GM12878 (cell line): ENCODE measurements at regions of chr4 and their contacts with region 1.

Region 1: GRCh38 chr4:163701916-163702315 is 207.4 kb downstream of the TMA16 start:
- DNase-seq: peak; percentile 49
- ATAC-seq: peak; percentile 93
- H3K4me3 ChIP-seq: no peak overlapping the region
- H3K27ac ChIP-seq: no peak overlapping the region
- H3K4me1 ChIP-seq: peaks cover 9% of the 10 kb centered on the region; the same call in 1 of the 2 replicates
- H3K27me3 ChIP-seq: no peaks in the 10 kb centered on the region
- CTCF ChIP-seq: no peak
- EP300 ChIP-seq: peak; percentile 49 to 77; a peak in 2 of 4 replicates
- POLR2A ChIP-seq: no peak
- RAD21 ChIP-seq: no peak

Region 2: DNA sequence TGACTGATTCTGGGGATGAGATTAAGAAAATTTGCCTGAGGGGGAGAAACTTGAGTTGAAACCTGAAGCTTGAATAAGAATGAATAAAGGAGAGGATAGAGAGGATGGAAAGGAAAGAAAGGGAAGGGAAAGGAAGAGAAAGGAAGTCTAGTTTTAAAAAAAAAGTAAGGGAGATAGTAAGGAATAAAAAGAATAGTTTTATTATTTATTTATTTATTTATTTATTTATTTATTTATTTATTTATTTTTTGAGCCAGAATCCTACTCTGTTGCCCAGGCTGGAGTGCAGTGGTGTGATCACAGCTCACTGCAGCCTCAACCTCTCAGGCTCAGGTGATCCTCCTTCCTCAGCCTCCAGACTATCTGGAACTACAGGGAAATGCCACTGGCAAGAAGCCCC is 473.3 kb before region 1 on chr4:
- CTCF ChIA-PET with region 1: no interaction called
- POLR2A ChIA-PET with region 1: no interaction called
- RAD21 ChIA-PET with region 1: no interaction called
- SMC1A ChIA-PET with region 1: no interaction called
- in situ Hi-C with region 1: no loop called
- intact Hi-C with region 1: no loop called
- DNase-seq: no peak
- ATAC-seq: no peak
- H3K4me3 ChIP-seq: no peak overlapping the region
- H3K27ac ChIP-seq: no peak overlapping the region
- H3K4me1 ChIP-seq: no peaks in the 10 kb centered on the region
- H3K27me3 ChIP-seq: no peaks in the 10 kb centered on the region
- CTCF ChIP-seq: no peak
- EP300 ChIP-seq: no peak
- POLR2A ChIP-seq: no peak
- RAD21 ChIP-seq: no peak

Region 3: DNA sequence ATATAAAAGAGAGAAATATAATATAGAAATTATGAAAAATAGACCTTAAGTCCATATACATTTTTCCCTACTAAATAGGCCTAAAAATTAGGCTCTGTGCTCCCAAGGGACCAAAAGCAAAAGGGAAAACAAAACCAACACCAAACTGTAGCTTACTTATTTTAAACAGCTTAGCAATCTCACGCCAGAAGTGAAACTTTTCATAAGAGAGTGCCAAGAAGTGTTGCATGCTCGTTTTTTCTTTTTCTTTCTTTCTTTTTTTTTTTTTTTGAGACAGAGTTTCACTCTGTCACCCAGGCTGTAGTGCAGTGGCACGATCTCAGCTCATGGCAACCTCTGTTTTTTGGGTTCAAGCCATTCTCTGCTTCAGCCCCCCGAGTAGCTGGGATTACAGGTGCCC is 42.9 kb after region 1 on chr4:
- CTCF ChIA-PET with region 1: interaction called, 7 read pairs
- POLR2A ChIA-PET with region 1: interaction called, 4 read pairs
- RAD21 ChIA-PET with region 1: no interaction called
- SMC1A ChIA-PET with region 1: interaction called, 4 read pairs
- in situ Hi-C with region 1: no loop called
- intact Hi-C with region 1: loop called (anchors 2 kb)
- DNase-seq: peak; percentile 57
- ATAC-seq: peak; percentile 94
- H3K4me3 ChIP-seq: 0 out of 2 replicates have a peak overlapping the region, but pooled peaks have one; percentile 5
- H3K27ac ChIP-seq: peak overlapping the region; percentile 57
- H3K4me1 ChIP-seq: peaks cover 10% of the 10 kb centered on the region
- H3K27me3 ChIP-seq: no peaks in the 10 kb centered on the region
- CTCF ChIP-seq: no peak
- EP300 ChIP-seq: peak; percentile 22 to 58; a peak in 2 of 4 replicates
- POLR2A ChIP-seq: no peak
- RAD21 ChIP-seq: no peak

Region 4: GRCh38 chr4:163895378-163896005 is 193.6 kb after region 1 on chr4:
- CTCF ChIA-PET with region 1: no interaction called
- POLR2A ChIA-PET with region 1: no interaction called
- RAD21 ChIA-PET with region 1: no interaction called
- SMC1A ChIA-PET with region 1: no interaction called
- in situ Hi-C with region 1: no loop called
- intact Hi-C with region 1: no loop called
- DNase-seq: no peak
- ATAC-seq: no peak
- H3K4me3 ChIP-seq: no peak overlapping the region
- H3K27ac ChIP-seq: no peak overlapping the region
- H3K4me1 ChIP-seq: no peaks in the 10 kb centered on the region
- H3K27me3 ChIP-seq: no peaks in the 10 kb centered on the region
- CTCF ChIP-seq: no peak
- EP300 ChIP-seq: no peak
- POLR2A ChIP-seq: no peak
- RAD21 ChIP-seq: no peak